ENCODE measurements at regions of chr12 and their contacts with region 1.

Region 1: DNA sequence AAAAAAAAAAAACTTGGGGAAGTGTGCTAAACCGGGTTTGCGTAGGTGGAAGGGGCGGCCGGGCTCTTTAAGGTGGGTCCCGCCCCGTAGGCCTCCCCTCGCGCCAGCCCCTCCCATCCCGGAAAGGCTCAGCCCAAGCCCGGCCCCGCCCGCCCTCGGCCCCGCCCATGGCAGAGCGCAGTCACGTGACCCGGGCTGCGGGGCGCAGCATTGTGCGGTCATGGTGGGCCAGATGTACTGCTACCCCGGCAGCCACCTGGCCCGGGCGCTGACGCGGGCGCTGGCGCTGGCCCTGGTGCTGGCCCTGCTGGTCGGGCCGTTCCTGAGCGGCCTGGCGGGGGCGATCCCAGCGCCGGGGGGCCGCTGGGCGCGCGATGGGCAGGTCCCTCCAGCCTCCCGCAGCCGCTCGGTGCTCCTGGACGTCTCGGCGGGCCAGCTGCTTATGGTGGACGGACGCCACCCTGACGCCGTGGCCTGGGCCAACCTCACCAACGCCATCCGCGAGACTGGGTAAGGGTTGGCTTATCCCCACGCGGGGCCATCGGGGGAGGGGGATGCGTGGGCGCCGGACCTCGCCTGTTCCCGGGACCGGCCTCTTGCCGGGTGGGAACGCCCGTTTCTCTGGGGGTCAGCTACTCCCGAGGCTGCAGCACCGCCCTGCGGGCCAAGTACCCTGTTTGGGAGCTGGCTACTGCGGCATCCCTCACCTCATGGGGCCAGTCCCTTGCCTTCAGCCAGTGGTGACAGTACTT is at the start of gene PLBD2:
- DNase-seq: peak; percentile 93
- ATAC-seq: peak; percentile 90 to 91
- H3K4me3 ChIP-seq: peak within 1 kb of the TSS; percentile 69
- H3K27ac ChIP-seq: peak within 1 kb of the TSS; percentile 79 to 93
- H3K4me1 ChIP-seq: peaks cover 8% of the 10 kb centered on the region; the same call in 1 of the 3 replicates
- CTCF ChIP-seq: no peak
- EP300 ChIP-seq: no peak
- POLR2A ChIP-seq: peak; percentile 86
- RAD21 ChIP-seq: no peak
- polyA plus RNA-seq, gene PLBD2: 13.2 and 22.3 TPM in 2 replicates

Region 2: GRCh38 chr12:113334786-113335540 is 23.6 kb before region 1 on chr12 and contains the start of gene SLC8B1:
- CTCF ChIA-PET with region 1: interaction called, 3 read pairs
- POLR2A ChIA-PET with region 1: interaction called, 11 read pairs
- DNase-seq: peak; percentile 83 to 86
- ATAC-seq: peak; percentile 94 to 98
- H3K4me3 ChIP-seq: peak within 1 kb of the TSS; percentile 49
- H3K27ac ChIP-seq: peak within 1 kb of the TSS; percentile 57 to 89
- H3K4me1 ChIP-seq: peaks cover 9% of the 10 kb centered on the region
- CTCF ChIP-seq: no peak
- EP300 ChIP-seq: no peak
- POLR2A ChIP-seq: peak; percentile 96
- RAD21 ChIP-seq: no peak
- polyA plus RNA-seq, gene SLC8B1: 11.0 and 14.4 TPM in 2 replicates

Region 3: GRCh38 chr12:113369391-113369985 is 10.9 kb after region 1 on chr12:
- CTCF ChIA-PET with region 1: no interaction called
- POLR2A ChIA-PET with region 1: no interaction called
- DNase-seq: no peak
- ATAC-seq: no peak
- H3K4me3 ChIP-seq: no peak overlapping the region
- H3K27ac ChIP-seq: no peak overlapping the region
- H3K4me1 ChIP-seq: no peaks in the 10 kb centered on the region
- CTCF ChIP-seq: no peak
- EP300 ChIP-seq: no peak
- POLR2A ChIP-seq: no peak
- RAD21 ChIP-seq: no peak

Region 4: GRCh38 chr12:113862590-113863454 is 504.3 kb after region 1 on chr12:
- CTCF ChIA-PET with region 1: no interaction called
- POLR2A ChIA-PET with region 1: no interaction called
- DNase-seq: peak in 1 of 2 experiments; percentile 20
- ATAC-seq: peak in 1 of 2 experiments; percentile 22; a peak in 4 of 6 replicates
- H3K4me3 ChIP-seq: no peak overlapping the region
- H3K27ac ChIP-seq: peak overlapping the region; percentile 56 to 88
- H3K4me1 ChIP-seq: peaks cover 28% of the 10 kb centered on the region
- CTCF ChIP-seq: no peak
- EP300 ChIP-seq: no peak
- POLR2A ChIP-seq: no peak
- RAD21 ChIP-seq: no peak

Measured in A549 (cell line).